CD14-positive monocyte (primary cell): ENCODE measurements at regions of chr3 and their contacts with region 1.

Region 1: DNA sequence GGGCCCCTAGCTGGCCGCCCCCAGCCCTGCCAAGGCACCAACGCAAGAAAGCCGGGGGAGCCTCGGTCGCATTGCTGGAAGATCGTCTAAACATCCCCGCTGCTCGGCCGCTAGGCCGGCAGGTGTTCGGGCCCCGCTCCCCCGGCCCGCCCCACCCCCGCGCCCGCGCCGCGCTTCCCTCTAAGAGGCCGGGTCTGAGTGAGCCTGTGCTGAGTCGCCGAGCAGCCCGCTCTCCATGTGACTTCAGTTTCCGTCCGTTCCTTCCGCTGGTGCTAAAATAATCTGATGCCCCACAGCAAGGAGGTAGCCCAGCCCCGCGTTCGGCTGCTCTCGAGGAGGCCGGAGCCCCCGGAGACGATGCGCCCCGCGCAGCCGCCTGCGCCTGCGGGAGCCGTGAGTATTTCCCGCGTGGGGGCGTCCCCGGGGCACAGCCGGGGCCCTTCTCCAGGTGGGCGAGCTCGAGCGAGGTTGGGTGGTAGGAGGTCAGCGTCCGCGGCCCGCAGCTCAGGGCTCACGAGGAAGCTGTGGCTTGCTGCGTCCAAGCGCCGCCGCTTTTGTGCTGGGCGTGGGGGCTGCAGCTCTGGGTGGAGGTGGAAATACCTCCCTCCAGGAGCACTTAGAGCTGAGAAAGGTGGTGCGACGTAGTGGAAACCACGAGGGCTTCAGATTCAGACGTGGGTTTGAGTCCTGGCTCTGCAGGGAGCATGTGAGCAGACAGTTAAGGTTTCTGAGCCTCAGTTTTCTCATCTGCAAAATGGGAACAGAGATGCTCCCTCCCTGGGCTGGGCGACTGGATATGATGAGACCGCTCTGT is at the start of gene NRROS:
- DNase-seq: peak; percentile 79 to 84 (median 83)
- H3K4me3 ChIP-seq: peak within 1 kb of the TSS; percentile 86 to 94 (median 93)
- H3K4me3 Mint-ChIP-seq: peak within 1 kb of the TSS; percentile 95 to 99
- H3K27ac ChIP-seq: peak within 1 kb of the TSS; percentile 95 to 96
- H3K27ac Mint-ChIP-seq: peak within 1 kb of the TSS; percentile 93 to 100 (median 99)
- H3K4me1 ChIP-seq: peaks cover 86 to 95% of the 10 kb centered on the region in 2 donors
- H3K4me1 Mint-ChIP-seq: peaks cover 78% of the 10 kb centered on the region
- H3K27me3 ChIP-seq: no peaks in the 10 kb centered on the region
- H3K27me3 Mint-ChIP-seq: peaks cover 0 to 3% (median 0%) of the 10 kb centered on the region in 3 donors
- CTCF ChIP-seq: no peak
- polyA plus RNA-seq, gene NRROS: 5.9 to 109 (median 7.5) TPM

Region 2: DNA sequence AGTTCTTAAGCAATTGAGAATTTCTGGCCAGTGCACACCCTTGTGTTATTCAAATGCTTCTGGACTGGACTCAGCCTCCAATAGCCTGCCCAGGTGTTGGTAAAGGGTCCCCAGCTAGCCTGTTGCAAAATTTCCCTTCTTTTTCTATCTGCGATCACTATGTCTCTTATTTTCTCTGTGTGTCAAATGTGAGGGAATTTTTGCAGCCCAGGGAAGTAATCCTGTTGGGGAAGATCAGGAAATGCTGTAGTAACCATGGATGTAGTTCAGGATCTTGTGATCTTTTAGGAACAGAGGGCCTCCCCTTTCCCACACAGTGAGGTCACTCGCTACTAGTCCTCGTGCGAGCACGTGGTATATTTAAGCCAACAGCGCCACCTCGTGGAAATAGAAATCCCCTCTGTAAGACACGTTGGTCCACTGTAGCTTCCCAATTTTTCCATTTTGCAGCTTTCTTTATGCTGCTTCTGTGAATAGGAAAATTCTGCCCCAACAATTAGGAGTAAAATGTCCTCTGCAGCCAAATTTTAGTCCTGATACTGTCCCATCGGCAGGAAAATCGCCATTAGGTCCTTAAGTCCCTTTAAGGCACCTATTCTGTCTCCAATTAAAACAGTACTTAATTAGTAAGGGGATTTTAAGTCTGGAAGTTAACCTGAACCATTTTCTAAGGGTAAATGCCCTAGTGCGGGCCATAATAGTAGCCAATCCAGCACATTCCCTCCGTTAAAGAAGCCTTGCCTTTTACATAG is 120.5 kb before region 1 on chr3:
- intact Hi-C with region 1: no loop called
- DNase-seq: peak; percentile 30 to 50 (median 39)
- H3K4me3 ChIP-seq: peak overlapping the region in 1 of 3 experiments; percentile 25
- H3K4me3 Mint-ChIP-seq: no peak overlapping the region
- H3K27ac ChIP-seq: no peak overlapping the region
- H3K27ac Mint-ChIP-seq: no peak overlapping the region
- H3K4me1 ChIP-seq: no peaks in the 10 kb centered on the region
- H3K4me1 Mint-ChIP-seq: no peaks in the 10 kb centered on the region
- H3K27me3 ChIP-seq: no peaks in the 10 kb centered on the region
- H3K27me3 Mint-ChIP-seq: peaks cover 0 to 1% (median 0%) of the 10 kb centered on the region in 3 donors
- CTCF ChIP-seq: peak; percentile 33

Region 3: GRCh38 chr3:196620161-196620604 is 19.5 kb before region 1 on chr3:
- intact Hi-C with region 1: loop called in 1 of 2 experiments (anchors 2 kb)
- DNase-seq: peak; percentile 91 to 97 (median 95)
- H3K4me3 ChIP-seq: peak overlapping the region in 1 of 3 experiments; percentile 27
- H3K4me3 Mint-ChIP-seq: peak overlapping the region; percentile 59 to 71
- H3K27ac ChIP-seq: peak overlapping the region; percentile 81 to 93
- H3K27ac Mint-ChIP-seq: peak overlapping the region; percentile 95 to 100 (median 99)
- H3K4me1 ChIP-seq: peaks cover 86 to 91% of the 10 kb centered on the region in 2 donors
- H3K4me1 Mint-ChIP-seq: peaks cover 79% of the 10 kb centered on the region
- H3K27me3 ChIP-seq: no peaks in the 10 kb centered on the region
- H3K27me3 Mint-ChIP-seq: peaks cover 0 to 2% (median 0%) of the 10 kb centered on the region in 3 donors
- CTCF ChIP-seq: no peak

Region 4: GRCh38 chr3:196650740-196651311 is 11.1 kb after region 1 on chr3:
- intact Hi-C with region 1: loop called in 1 of 2 experiments (anchors 1 kb)
- DNase-seq: peak; percentile 88 to 95 (median 93)
- H3K4me3 ChIP-seq: no peak overlapping the region
- H3K4me3 Mint-ChIP-seq: peak overlapping the region in 1 of 2 donors; percentile 54
- H3K27ac ChIP-seq: peak overlapping the region; percentile 88 to 90
- H3K27ac Mint-ChIP-seq: peak overlapping the region; percentile 93 to 97 (median 95)
- H3K4me1 ChIP-seq: peaks cover 72 to 76% of the 10 kb centered on the region in 2 donors
- H3K4me1 Mint-ChIP-seq: peaks cover 75% of the 10 kb centered on the region
- H3K27me3 ChIP-seq: no peaks in the 10 kb centered on the region
- H3K27me3 Mint-ChIP-seq: peaks cover 0 to 3% (median 0%) of the 10 kb centered on the region in 3 donors
- CTCF ChIP-seq: no peak

Region 5: GRCh38 chr3:196684548-196685407 is 45.1 kb after region 1 on chr3:
- intact Hi-C with region 1: loop called in 1 of 2 experiments (anchors 5 kb)
- DNase-seq: peak; percentile 62 to 76 (median 76)
- H3K4me3 ChIP-seq: peak overlapping the region in 1 of 3 experiments; percentile 55
- H3K4me3 Mint-ChIP-seq: peak overlapping the region; percentile 24 to 88
- H3K27ac ChIP-seq: peak overlapping the region; percentile 61 to 89
- H3K27ac Mint-ChIP-seq: peak overlapping the region; percentile 81 to 100 (median 90)
- H3K4me1 ChIP-seq: peaks cover 54 to 58% of the 10 kb centered on the region in 2 donors
- H3K4me1 Mint-ChIP-seq: peaks cover 52% of the 10 kb centered on the region
- H3K27me3 ChIP-seq: no peaks in the 10 kb centered on the region
- H3K27me3 Mint-ChIP-seq: no peaks in the 10 kb centered on the region
- CTCF ChIP-seq: peak; percentile 86